ENCODE measurements at regions of chr2 and their contacts with region 1.

Region 1: DNA sequence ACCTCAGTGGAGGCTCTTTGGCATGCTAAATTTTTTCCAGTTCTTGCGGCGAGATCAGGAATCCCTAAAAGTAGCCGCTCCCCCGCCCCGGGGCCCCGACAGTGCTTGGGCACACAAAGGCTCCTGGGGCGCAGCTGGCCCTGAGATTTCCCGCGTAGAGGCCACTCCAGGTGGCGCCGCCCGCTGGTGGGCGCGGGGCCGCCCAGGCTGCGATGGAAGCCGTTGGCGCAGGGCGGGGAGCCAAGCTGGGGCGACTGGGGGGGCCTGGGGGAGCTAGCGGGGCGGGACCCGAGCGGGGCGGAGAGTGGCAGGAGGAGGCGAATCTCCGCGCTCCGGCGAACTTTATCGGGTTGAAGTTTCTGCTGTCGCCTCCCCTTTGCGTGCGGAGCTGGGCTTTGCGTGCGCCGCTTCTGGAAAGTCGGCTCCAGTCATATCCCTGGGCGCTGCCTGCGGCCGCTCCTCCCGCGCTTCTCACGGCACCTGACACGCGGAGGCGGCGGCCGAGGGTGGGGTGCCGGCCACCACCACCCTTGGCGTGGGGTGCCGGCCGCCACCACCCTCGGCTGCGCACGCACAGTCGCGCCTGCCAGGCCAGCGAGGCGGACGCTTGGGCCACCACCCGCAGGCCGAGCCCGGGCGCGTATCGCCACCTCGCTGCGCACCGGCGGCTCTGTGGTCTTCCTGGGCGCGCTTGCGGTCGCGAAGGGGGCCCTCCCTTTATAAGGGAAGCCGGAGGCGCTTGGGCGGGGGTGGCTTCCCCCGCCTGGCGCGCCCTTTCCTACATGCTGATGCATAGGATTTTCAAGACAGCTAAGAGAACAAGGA is 867 bp upstream of the CYP1B1 start:
- DNase-seq: peak; percentile 90
- ATAC-seq: peak; percentile 75
- H3K4me3 Mint-ChIP-seq: peak overlapping the region; percentile 71
- H3K27ac Mint-ChIP-seq: peak overlapping the region; percentile 88
- H3K4me1 Mint-ChIP-seq: peaks cover 24% of the 10 kb centered on the region
- H3K27me3 Mint-ChIP-seq: peaks cover 64% of the 10 kb centered on the region

Region 2: GRCh38 chr2:37827907-37828511 is 248.8 kb before region 1 on chr2:
- CTCF ChIA-PET with region 1: no interaction called
- POLR2A ChIA-PET with region 1: no interaction called
- intact Hi-C with region 1: no loop called
- DNase-seq: no peak
- ATAC-seq: no peak
- H3K4me3 Mint-ChIP-seq: no peak overlapping the region
- H3K27ac Mint-ChIP-seq: no peak overlapping the region
- H3K4me1 Mint-ChIP-seq: peaks cover 15% of the 10 kb centered on the region
- H3K27me3 Mint-ChIP-seq: no peaks in the 10 kb centered on the region

Region 3: GRCh38 chr2:37982147-37982582 is 94.7 kb before region 1 on chr2:
- CTCF ChIA-PET with region 1: interaction called, 3 read pairs
- POLR2A ChIA-PET with region 1: no interaction called
- intact Hi-C with region 1: loop called in 1 of 2 experiments (anchors 10 kb)
- DNase-seq: peak; percentile 74
- ATAC-seq: no peak
- H3K4me3 Mint-ChIP-seq: no peak overlapping the region
- H3K27ac Mint-ChIP-seq: no peak overlapping the region
- H3K4me1 Mint-ChIP-seq: peaks cover 4% of the 10 kb centered on the region
- H3K27me3 Mint-ChIP-seq: peaks cover 3% of the 10 kb centered on the region

Region 4: DNA sequence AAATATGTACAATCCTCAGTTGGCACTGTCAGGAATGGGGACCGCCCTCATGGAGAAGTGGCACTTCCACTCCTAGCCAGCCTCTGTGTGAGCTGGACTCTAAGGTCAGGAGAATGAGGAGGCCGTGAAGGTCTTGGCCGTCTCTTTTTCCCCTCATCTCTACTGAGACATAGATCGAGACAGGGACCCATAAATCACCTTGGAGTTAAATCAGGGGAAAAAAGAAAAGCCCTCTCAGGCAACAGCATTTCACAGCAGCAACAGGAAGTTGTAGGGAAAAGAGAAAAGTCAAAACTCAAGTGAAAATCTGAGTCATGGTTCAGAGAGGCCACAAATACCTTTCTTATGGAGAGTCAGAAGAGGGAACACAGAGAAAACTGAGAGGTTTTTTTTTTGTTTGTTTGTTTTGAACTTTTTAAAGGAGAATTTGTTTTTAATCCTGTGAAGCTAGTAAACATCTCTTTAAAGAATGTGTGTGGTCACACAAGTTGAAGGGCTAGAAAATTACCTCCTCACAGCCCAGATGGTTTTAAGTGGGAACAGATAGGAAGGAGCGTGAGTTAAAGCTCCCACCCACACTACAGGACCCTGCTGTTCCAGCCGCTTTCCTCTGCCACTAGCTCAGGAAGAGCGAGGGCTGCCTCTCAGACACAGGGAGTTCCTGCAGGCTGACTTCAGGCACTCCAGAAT is 29.7 kb after region 1 on chr2:
- CTCF ChIA-PET with region 1: interaction called, 4 read pairs
- POLR2A ChIA-PET with region 1: no interaction called
- intact Hi-C with region 1: loop called (anchors 2 kb)
- DNase-seq: no peak
- ATAC-seq: peak; percentile 88
- H3K4me3 Mint-ChIP-seq: no peak overlapping the region
- H3K27ac Mint-ChIP-seq: peak overlapping the region; percentile 61
- H3K4me1 Mint-ChIP-seq: peaks cover 21% of the 10 kb centered on the region
- H3K27me3 Mint-ChIP-seq: peaks cover 33% of the 10 kb centered on the region

Region 5: DNA sequence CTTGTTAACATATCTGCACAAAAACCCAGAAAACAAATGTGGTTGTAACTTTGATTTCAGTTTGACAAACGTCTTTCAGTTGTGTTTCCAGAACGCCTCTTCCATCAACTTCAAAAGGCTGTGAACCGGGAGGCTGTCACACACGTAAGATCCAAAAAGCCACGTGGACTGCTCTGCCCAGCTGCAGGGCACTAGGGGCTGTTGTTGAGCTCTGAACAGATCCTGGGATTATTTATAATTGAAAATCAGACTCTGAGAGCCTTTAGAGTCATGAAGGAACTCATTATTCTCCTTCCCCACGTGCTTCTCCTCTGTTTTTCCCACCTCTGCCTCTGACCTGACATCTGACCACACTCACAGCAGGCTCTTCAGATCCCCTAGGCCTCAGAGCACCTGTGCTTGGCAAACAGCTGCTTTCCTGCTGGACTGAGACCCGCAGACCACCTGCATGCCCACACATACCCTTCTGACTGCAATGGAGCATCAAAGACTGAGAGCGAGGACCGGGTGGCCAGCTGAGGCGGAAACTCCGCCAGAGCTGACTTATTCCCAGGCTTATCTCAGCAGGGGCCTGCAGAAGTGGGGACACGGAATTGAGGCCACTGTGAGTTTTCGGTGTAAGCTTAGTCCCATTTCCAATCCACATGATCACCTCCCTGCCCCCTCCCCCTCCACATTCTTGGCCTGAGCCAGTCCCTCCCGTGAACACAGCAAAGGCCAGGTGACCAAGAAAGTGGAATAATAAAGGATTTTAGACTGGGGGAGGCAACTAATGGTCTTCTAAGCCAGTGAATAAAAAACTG is 185.5 kb after region 1 on chr2:
- CTCF ChIA-PET with region 1: no interaction called
- POLR2A ChIA-PET with region 1: no interaction called
- intact Hi-C with region 1: loop called in 1 of 2 experiments (anchors 2 kb)
- DNase-seq: peak; percentile 66
- ATAC-seq: peak; percentile 93
- H3K4me3 Mint-ChIP-seq: no peak overlapping the region
- H3K27ac Mint-ChIP-seq: peak overlapping the region; percentile 11
- H3K4me1 Mint-ChIP-seq: peaks cover 27% of the 10 kb centered on the region
- H3K27me3 Mint-ChIP-seq: peaks cover 29% of the 10 kb centered on the region